Cardiac septum (tissue), 1 donor: ENCODE measurements at regions of chr1 and their contacts with region 1.

Region 1: GRCh38 chr1:11979851-11980675 is at the start of gene MFN2:
- DNase-seq: peak; percentile 98
- total RNA-seq, gene MFN2: 619 TPM

Region 2: GRCh38 chr1:11907275-11908094 is 72.6 kb before region 1 on chr1:
- intact Hi-C with region 1: loop called (anchors 5 kb)
- DNase-seq: peak; percentile 94

Region 3: DNA sequence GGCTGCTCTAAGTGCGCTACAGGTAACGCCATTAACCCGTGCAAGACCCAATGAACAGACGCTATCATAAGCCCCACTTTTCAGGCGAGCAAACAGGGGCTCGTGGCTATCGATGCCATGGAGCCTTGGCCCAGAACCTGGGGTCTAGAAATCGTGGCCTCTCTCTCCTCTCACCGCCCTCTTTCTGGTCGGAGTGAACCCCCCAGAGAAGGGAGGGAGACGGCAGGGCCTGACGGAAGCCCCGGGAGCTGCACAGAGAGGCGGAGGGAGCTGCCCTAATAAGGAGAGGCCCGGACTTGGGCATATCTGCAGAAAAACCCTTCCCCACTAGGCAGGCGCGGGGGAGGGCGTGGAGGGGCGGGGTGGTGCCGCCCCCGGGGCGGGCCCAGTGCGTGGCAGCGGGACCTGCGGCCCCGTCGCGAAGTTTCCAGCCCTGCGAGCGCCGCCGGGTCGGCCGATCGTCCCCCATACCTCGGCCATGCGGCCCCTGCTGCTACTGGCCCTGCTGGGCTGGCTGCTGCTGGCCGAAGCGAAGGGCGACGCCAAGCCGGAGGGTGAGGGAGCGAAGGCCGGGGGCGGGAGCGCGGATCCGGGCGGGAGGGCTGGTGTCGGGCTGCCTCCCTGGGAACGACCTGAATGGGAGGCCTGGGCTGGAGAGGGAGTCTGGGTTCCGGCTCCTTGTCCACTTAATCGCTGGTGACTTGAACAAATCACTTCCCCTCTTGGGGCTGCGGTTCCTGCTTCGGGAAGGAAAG is 45.6 kb before region 1 on chr1 and contains the start of gene PLOD1:
- intact Hi-C with region 1: loop called (anchors 5 kb)
- DNase-seq: peak; percentile 95
- total RNA-seq, gene PLOD1: 52.6 TPM